CD8-positive, alpha-beta T cell (primary cell): ENCODE measurements at regions of chr2 and their contacts with region 1.

Region 1: DNA sequence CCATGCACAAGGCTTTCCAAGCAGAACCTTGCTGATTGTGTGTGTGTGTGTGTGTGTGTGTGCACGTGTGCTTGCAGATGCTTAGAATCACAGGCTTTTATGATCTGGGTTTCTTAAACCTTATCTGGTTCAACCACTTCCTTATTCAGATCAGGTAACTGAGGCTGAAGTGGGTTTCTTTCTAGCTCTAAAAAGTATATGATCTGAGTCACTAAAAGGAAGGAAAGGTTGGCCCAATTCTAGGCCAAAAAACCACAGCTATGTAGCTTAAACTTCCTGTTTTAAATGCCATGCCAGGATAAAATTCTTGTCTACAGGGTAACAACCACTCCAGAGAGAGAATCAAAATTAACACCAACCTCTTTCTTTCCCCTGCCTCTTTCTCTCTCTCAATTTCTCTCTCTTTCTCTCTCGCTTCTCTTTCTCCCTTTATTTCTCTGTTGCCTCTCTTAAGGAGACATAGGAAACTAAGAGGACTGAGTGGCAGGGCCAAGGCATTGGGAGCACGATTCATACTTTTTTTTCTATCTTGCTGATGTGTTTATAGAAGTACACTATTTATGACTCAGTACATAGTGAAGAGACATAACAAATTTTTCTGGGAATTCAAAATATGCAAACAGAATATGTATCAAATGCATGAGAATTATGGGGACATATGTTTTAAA is 140.3 kb downstream of the TRIB2 start:
- DNase-seq: peak in 7 of 9 experiments; percentile 12 to 78 (median 32)
- ATAC-seq: peak; percentile 87
- H3K4me3 ChIP-seq: no peak overlapping the region
- H3K4me3 Mint-ChIP-seq: no peak overlapping the region
- H3K27ac ChIP-seq: peak overlapping the region in 1 of 2 experiments; percentile 41
- H3K27ac Mint-ChIP-seq: no peak overlapping the region
- H3K4me1 ChIP-seq: peaks cover 41% of the 10 kb centered on the region
- H3K4me1 Mint-ChIP-seq: peaks cover 16% of the 10 kb centered on the region
- H3K27me3 ChIP-seq: no peaks in the 10 kb centered on the region
- H3K27me3 Mint-ChIP-seq: peaks cover 12% of the 10 kb centered on the region
- CTCF ChIP-seq: no peak

Region 2: GRCh38 chr2:12897181-12897580 is 40.1 kb after region 1 on chr2:
- CTCF ChIA-PET with region 1: interaction called, 3 read pairs
- POLR2A ChIA-PET with region 1: no interaction called
- intact Hi-C with region 1: loop called in 1 of 2 experiments (anchors 2 kb)
- DNase-seq: peak in 2 of 9 experiments; percentile 13 to 56
- ATAC-seq: no peak
- H3K4me3 ChIP-seq: no peak overlapping the region
- H3K4me3 Mint-ChIP-seq: peak overlapping the region; percentile 43
- H3K27ac ChIP-seq: no peak overlapping the region
- H3K27ac Mint-ChIP-seq: peak overlapping the region; percentile 58
- H3K4me1 ChIP-seq: peaks cover 13% of the 10 kb centered on the region
- H3K4me1 Mint-ChIP-seq: peaks cover 24% of the 10 kb centered on the region
- H3K27me3 ChIP-seq: no peaks in the 10 kb centered on the region
- H3K27me3 Mint-ChIP-seq: no peaks in the 10 kb centered on the region
- CTCF ChIP-seq: no peak